Naive thymus-derived CD4-positive, alpha-beta T cell (primary cell): ENCODE measurements at regions of chr17 and their contacts with region 1.

Region 1: DNA sequence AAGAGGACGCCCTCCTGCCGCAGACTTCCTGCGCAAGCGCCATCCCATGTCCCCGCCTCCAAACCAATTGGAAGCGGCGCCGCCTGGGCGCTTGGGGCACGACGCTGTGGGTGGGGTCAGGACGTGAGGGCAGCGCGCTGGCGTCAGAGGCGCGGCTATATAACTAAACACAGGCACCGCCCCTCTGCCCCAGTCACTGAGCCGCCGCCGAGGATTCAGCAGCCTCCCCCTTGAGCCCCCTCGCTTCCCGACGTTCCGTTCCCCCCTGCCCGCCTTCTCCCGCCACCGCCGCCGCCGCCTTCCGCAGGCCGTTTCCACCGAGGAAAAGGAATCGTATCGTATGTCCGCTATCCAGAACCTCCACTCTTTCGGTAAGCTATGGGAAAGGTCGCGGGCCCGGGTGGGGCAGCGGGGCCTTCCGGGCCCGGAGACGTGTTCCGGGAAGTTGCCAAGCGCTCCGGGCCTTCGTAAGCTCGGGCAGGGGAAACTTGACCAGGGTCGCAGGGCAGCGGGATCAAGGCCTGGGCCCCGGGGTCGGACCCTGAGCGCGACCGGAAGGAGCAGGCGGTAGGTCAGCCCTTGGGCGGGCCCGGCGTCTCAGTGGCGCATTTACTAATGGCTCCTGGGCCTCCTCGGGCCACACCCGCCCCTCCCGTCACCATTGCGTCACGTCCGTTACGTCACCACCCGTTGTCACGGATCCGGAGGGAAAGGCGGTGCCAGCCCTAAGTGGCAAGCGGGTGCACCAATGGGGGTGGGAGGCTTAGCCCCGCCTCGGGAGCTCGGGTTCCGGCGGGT is at the start of gene EIF1:
- DNase-seq: peak; percentile 98 to 100 (median 99)
- ATAC-seq: peak; percentile 85
- H3K4me3 ChIP-seq: peak within 1 kb of the TSS; percentile 86
- H3K4me3 Mint-ChIP-seq: peak within 1 kb of the TSS; percentile 90 to 99 (median 96)
- H3K27ac ChIP-seq: peak within 1 kb of the TSS; percentile 99
- H3K27ac Mint-ChIP-seq: peak within 1 kb of the TSS; percentile 98 to 99 (median 99)
- H3K4me1 ChIP-seq: peaks cover 22 to 25% of the 10 kb centered on the region in 2 donors
- H3K4me1 Mint-ChIP-seq: peaks cover 13 to 43% (median 35%) of the 10 kb centered on the region in 7 donors
- H3K27me3 ChIP-seq: no peaks in the 10 kb centered on the region
- H3K27me3 Mint-ChIP-seq: peaks cover 0 to 9% (median 0%) of the 10 kb centered on the region in 5 donors
- total RNA-seq, gene EIF1: 710 to 2,222 (median 934) TPM

Region 2: GRCh38 chr17:40647624-40648383 is 1041.1 kb before region 1 on chr17 and contains the start of gene SMARCE1:
- CTCF ChIA-PET with region 1: no interaction called
- POLR2A ChIA-PET with region 1: interaction called, 7 read pairs
- intact Hi-C with region 1: loop called in 1 of 2 experiments (anchors 2 kb)
- DNase-seq: peak; percentile 63 to 81 (median 76)
- ATAC-seq: peak; percentile 87
- H3K4me3 ChIP-seq: peak within 1 kb of the TSS; percentile 89
- H3K4me3 Mint-ChIP-seq: peak within 1 kb of the TSS; percentile 86 to 99 (median 90)
- H3K27ac ChIP-seq: peak within 1 kb of the TSS; percentile 95
- H3K27ac Mint-ChIP-seq: peak within 1 kb of the TSS; percentile 86 to 100 (median 98)
- H3K4me1 ChIP-seq: peaks cover 11 to 33% of the 10 kb centered on the region in 2 donors
- H3K4me1 Mint-ChIP-seq: peaks cover 27 to 64% (median 46%) of the 10 kb centered on the region in 7 donors
- H3K27me3 ChIP-seq: no peaks in the 10 kb centered on the region
- H3K27me3 Mint-ChIP-seq: no peaks in the 10 kb centered on the region
- total RNA-seq, gene SMARCE1: 65.4 to 101 (median 79.2) TPM

Region 3: DNA sequence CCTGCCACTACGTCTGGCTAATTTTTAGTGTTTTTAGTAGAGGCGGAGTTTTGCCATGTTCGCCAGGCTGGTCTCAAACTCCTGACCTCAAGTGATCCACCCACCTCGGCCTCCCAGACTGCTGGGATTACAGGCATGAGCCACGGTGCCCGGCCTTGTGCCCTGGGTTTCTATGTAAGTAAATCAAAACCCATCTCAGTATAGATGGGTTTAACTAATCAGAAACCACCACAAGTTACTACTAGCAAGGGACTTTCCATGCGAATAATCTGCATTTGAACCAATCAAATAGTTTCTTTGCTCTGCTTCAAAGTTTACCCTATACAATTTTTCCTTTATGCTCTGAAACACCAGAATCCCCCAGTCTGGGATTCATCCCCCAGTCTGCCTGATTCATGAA is 16.7 kb before region 1 on chr17:
- CTCF ChIA-PET with region 1: interaction called, 74 read pairs
- POLR2A ChIA-PET with region 1: interaction called, 255 read pairs
- intact Hi-C with region 1: no loop called
- DNase-seq: no peak
- ATAC-seq: no peak
- H3K4me3 ChIP-seq: no peak overlapping the region
- H3K4me3 Mint-ChIP-seq: no peak overlapping the region
- H3K27ac ChIP-seq: no peak overlapping the region
- H3K27ac Mint-ChIP-seq: peak overlapping the region in 1 of 9 donors; percentile 52
- H3K4me1 ChIP-seq: peaks cover 0 to 5% of the 10 kb centered on the region in 2 donors
- H3K4me1 Mint-ChIP-seq: peaks cover 0 to 59% (median 5%) of the 10 kb centered on the region in 7 donors
- H3K27me3 ChIP-seq: no peaks in the 10 kb centered on the region
- H3K27me3 Mint-ChIP-seq: no peaks in the 10 kb centered on the region

Region 4: DNA sequence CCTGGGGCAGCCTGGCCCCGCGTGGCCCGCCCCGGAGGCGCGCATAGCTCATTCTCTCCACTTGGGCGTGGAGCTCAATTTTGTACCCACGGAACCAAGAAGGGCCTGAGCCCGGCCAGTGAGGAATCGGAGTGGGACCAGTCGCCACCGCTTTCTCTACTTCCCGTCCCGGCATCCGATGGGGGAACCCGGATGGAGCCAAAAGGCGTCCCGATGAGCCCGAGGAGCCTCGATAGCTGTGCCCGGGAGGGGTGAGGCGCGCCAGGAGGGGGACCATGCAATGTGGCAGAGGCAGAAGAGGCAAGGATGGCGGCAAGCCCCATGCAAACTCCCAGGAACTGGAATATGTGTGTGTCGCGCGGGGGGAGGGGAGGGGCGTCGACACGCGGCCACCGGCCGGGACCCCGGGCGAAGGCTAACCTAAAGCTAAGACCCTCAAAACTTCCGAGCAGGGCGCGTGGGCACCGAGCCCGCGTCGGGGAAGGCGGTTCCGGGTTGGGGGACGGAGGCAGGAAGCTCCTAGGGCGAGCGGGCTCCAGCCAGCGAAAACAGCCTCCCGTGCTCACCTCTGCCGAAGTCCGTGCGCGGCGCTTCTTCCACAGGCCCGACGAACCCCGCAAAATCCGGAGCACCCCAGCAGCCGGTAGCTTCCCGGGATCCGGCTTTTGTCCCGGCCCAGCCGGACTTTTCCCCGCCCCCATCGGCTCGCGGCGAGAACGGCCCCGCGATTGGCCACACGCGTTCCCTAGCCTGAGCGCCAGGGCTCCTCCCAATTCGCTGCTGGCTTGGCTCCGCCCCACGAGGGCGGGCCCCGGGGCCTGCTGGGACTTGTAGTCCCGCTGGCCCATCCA is 229.6 kb after region 1 on chr17 and contains the start of gene ACLY:
- CTCF ChIA-PET with region 1: no interaction called
- POLR2A ChIA-PET with region 1: interaction called, 3 read pairs
- intact Hi-C with region 1: loop called in 1 of 2 experiments (anchors 2 kb)
- DNase-seq: peak; percentile 88 to 99 (median 92)
- ATAC-seq: peak; percentile 100
- H3K4me3 ChIP-seq: peak within 1 kb of the TSS; percentile 94
- H3K4me3 Mint-ChIP-seq: peak within 1 kb of the TSS; percentile 84 to 99 (median 89)
- H3K27ac ChIP-seq: peak within 1 kb of the TSS; percentile 79
- H3K27ac Mint-ChIP-seq: peak within 1 kb of the TSS; percentile 48 to 97 (median 78)
- H3K4me1 ChIP-seq: peaks cover 8 to 14% of the 10 kb centered on the region in 2 donors
- H3K4me1 Mint-ChIP-seq: peaks cover 29 to 48% (median 35%) of the 10 kb centered on the region in 7 donors
- H3K27me3 ChIP-seq: no peaks in the 10 kb centered on the region
- H3K27me3 Mint-ChIP-seq: no peaks in the 10 kb centered on the region
- total RNA-seq, gene ACLY: 59.2 to 154 (median 70.8) TPM